AG04450 (cell line): ENCODE measurements at regions of chr2 and their contacts with region 1.

Region 1: DNA sequence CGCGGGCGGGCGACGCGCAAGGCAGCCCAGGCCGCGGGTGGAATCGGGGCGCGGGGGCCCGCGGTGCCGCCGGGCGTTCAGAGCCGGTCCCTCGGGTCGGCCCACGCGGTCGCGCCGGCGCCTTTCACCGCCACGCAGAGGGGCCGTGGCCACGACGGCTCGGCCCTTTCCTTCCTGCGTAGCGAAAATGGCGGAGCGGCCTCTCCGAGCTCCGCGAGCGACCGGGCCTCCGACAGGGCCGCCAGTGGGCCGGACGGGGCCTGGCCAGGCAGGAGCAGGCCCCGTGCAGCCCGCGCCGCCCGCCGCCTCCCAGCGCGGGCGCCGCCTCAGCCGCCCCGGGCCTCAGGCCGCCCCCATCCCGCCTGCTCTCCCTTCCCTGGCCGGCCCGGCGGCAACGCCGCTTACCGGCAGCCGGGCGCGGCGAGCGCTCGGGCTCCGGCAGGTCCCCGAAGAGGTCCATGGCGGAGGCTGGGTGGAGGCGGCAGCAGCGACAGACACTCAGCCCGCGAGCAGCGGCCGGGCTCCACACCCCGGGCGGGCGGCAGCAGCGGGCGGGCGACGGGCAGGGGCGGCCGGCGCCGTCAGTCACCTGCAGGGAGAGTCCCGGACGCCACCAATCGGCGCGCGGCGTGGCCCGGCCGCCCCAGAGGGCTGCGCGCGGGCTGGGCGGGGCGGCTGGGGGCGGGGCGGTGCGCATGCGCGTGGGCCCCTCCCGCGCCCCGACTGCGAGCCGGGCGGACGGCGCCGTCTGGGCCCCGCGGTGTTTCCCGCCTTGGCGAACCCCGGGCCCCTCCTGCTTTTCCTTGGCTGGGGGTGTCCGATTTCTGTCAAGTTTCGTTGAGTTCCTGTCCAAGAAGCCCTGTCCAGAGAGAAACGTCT is at the start of gene ILKAP:
- DNase-seq: no peak
- H3K4me3 ChIP-seq: peak within 1 kb of the TSS; percentile 78
- H3K27ac ChIP-seq: peak within 1 kb of the TSS; percentile 22
- H3K27me3 ChIP-seq: peaks cover 6% of the 10 kb centered on the region
- CTCF ChIP-seq: no peak
- polyA plus RNA-seq, gene ILKAP: 29.4 and 34.9 TPM in 2 replicates

Region 2: DNA sequence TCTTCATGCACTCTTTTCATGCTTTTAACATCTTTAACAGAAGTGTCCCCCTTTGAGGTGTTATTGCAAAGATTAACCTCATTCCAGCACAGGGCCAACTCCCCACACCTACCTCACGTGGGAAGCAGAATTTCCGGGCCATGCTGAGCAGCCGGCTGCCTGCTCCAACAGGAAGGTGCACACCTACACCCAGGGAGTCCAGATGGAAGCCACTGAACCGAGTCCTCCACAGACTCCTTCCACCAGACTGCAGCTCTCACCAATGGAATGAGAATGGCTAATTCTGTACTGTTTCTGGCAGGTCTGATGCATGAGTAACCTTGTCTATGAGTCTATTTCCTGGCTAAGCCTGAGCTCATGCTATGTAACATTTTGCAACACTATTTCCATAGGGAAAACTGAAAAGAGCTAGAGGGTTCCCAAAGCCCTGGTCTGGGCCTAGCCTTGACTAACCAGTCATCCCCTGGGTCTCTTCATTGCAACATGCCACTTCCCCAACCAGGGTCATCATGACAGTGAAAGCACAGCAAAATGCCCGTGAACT is 33.6 kb before region 1 on chr2:
- CTCF ChIA-PET with region 1: no interaction called
- POLR2A ChIA-PET with region 1: interaction called, 14 read pairs
- DNase-seq: peak; percentile 88
- H3K4me3 ChIP-seq: peak overlapping the region; percentile 28
- H3K27ac ChIP-seq: peak overlapping the region; percentile 100
- H3K27me3 ChIP-seq: no peaks in the 10 kb centered on the region
- CTCF ChIP-seq: no peak